ENCODE measurements at regions of chr14 and their contacts with region 1.

Region 1: DNA sequence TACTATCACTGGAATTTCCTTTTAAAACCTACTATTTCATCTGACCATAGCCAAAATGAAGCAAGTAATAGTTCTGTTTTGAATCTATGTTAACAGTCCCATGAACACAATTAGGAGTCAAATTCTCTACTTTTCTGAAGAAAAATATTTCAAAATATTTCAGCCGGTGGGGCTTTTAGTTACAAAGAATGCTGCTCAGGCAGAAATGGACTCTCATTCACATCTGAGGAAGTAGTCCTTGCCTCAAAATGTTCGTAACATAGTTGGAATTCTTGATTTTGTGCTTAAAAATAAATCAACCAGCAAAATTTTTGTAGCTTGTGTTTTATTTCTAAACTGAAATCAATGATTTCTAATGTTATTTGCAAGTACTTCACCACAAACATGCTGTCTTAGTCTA is 52.3 kb downstream of the HNRNPC start:
- DNase-seq: no peak
- H3K4me3 Mint-ChIP-seq: no peak overlapping the region
- H3K27ac Mint-ChIP-seq: no peak overlapping the region
- H3K4me1 Mint-ChIP-seq: peaks cover 27% of the 10 kb centered on the region
- H3K27me3 Mint-ChIP-seq: no peaks in the 10 kb centered on the region
- CTCF ChIP-seq: no peak

Region 2: DNA sequence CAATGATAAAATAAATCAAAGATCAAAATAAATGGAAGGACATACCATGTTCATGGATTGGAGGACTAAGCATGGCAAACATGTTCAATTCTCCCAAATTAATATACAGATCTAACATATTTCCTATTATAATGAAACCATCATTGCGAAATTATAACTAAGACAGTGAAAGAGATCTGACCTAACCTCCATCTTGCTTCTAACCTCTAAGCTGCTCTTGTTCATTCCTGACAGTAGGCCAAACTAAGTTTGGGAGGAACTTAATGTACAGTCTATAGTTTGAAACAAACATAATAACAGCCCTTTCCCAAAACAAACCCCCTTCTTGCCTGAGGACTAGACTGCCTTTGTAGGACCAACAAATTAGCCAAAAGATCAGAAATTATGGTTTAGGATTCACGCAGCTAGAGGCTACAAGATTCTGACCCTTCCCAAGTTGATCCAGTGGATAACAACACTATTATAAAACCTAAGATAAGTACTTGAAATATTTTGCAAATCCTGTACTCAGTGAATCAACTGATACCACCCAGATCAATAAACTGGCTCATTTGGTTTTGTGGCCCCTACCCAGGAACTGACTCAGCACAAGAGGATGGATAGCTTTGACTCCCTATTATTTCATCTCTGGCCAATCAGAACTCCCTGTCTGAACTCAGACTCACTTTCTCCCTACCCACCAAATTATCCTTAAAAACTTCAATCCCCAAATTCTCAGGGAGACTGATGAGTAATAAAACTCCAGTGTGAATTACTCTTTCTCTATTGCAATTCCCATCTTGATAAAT is 19.3 kb before region 1 on chr14:
- CTCF ChIA-PET with region 1: no interaction called
- POLR2A ChIA-PET with region 1: interaction called, 10 read pairs
- intact Hi-C with region 1: no loop called
- DNase-seq: no peak
- H3K4me3 Mint-ChIP-seq: no peak overlapping the region
- H3K27ac Mint-ChIP-seq: peak overlapping the region; percentile 57
- H3K4me1 Mint-ChIP-seq: peaks cover 6% of the 10 kb centered on the region
- H3K27me3 Mint-ChIP-seq: peaks cover 11% of the 10 kb centered on the region
- CTCF ChIP-seq: no peak

Region 3: DNA sequence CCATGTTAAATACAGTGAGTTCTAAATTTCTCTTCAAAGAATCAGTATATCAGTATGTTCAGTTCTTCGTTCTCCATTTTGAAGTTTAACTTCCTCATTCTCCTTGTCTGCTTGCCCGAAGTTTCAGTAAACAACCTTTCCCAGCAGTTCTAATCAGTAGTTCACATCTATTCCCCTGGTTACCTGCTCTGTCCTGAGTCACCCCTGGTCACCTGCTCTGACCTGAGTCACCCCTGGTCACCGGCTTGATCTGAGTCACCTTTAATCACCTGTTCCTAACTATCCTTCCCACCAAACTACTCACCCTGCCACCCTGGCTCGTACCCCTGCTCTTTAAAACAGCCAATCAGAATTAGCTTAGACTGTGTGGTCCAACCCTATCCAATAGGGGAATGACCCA is 372.4 kb after region 1 on chr14:
- CTCF ChIA-PET with region 1: no interaction called
- POLR2A ChIA-PET with region 1: no interaction called
- intact Hi-C with region 1: no loop called
- DNase-seq: no peak
- H3K4me3 Mint-ChIP-seq: no peak overlapping the region
- H3K27ac Mint-ChIP-seq: no peak overlapping the region
- H3K4me1 Mint-ChIP-seq: no peaks in the 10 kb centered on the region
- H3K27me3 Mint-ChIP-seq: peaks cover 13% of the 10 kb centered on the region
- CTCF ChIP-seq: no peak